Head of caudate nucleus (tissue), 42 donors: ENCODE measurements at regions of chr5 and their contacts with region 1.

Region 1: DNA sequence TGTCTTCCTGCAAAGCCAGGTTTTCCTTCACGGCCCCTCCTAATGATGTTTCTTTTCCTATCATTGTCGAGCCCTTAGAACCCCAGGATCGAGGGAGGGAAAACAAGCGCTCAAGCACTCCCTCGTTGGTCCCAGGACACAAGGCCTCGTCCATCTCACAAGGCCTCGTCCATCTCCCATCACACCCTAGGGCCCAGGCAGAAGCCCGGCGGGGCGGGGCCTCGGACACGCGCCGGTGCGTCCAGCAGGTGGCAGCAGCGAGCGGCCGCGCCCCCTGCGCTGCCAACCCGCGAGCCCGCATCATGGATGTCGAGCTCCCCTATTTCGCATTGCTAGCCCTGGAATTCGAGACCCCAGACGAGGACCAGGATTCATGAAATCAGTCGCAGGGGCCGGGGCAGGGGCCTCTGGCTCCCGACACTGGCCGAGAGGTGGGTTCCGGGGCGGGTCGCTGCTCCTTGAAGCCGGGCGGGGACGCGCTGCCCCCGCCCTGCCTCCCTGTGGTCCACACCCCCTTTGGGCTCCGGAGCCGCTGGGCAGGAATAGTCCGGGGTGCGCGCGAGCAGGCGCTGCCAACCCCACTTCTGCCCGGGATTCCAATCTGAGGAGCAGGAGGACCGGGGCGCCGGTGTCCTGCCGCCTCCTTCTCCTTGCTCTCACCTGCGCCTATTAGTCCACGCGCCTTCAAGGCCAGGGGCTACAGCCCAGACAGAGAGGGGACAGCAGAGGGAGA is at the start of gene ABLIM3:
- DNase-seq: peak; percentile 22 to 88 (median 73)

Region 2: GRCh38 chr5:149079883-149080282 is 61.5 kb before region 1 on chr5:
- intact Hi-C with region 1: no loop called
- DNase-seq: no peak

Region 3: GRCh38 chr5:149228618-149229297 is 87.4 kb after region 1 on chr5:
- intact Hi-C with region 1: loop called (anchors 5 kb)
- DNase-seq: peak in 10 of 42 donors; percentile 17 to 51 (median 26)

Region 4: DNA sequence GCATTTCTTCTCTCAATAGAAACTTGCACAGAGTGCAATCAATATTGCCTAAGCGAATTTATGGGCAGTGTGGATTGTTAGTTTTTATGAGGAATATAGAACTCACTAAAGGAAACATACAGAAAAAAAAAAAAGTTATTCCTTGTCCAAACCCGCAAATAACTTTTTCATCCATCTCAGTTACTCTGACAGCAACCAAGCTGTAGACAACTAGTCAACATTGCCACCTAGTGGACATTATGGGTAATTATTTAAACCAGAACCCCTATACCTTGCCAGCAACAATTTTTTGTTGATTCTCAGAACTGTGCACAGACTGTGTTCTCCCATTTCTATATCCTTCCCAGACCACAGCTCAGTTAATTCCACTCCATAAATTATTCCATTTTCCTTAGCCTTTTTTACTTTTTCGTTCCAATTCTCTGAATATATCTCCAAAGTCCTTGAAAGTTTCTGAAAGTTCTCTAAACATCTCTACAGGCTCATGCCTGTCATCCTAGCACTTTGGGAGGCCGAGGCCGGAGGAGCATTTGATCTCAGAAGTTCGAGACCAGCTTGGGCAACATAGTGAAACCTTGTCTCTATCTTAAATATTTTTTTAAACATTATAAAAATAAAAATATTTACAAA is 127.7 kb after region 1 on chr5:
- intact Hi-C with region 1: loop called (anchors 10 kb)
- DNase-seq: peak in 2 of 42 donors; percentile 26 to 48

Region 5: DNA sequence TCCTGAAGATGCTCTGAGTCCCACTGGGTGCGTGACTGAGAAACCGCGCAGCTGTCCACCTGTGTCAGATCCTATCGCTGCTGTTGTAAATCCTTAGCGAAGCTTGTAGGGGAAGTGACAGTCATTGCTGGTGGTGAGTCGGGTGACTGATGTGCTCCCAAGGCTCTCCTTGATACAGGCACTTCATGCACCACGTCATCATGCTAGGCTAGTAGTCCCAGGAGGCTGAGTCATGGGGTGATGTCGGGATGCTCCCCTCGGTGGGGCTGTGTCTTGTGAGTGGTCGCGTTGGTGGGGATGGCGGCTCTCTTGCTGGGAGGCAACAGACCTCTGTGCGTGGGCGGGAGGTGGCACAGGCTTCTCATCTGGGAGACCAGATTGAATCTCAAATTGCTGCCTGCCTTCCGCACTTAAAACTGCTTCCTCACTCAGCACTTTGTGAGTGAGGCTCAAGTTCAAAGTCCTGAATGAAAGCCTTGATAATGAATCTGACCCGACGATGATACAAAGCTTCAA is 325.1 kb after region 1 on chr5:
- intact Hi-C with region 1: no loop called
- DNase-seq: peak in 35 of 42 donors; percentile 7 to 76 (median 40)